AG04449 (cell line): ENCODE measurements at regions of chr5 and their contacts with region 1.

Region 1: DNA sequence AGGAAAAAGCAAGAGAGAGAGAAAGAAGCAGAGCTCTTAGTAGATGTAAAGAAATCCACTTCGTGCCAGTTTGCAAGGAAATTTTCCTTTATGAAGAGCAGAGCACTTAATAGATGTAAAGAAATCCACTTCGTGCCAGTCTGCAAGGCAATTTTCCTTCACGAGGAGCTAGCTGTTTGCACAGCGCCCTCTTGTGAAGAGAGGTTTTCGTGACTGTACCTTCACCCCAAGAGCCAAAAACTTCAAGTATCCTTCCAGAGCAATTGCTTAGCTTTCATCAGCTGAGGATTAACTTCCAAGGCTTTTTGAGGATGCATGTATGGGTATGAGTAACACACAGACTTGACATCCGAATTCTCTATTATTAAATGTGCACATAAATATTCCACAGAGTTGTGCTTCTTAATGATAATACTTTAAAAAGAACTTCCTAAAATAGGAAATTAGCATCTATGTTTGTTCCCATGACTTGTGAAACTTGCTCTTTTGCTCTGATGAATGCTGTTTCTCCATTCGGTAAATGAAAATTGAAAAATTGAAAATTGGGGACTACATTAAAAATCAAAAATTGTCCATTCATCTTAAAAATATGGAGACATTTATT is 525.6 kb downstream of the PDE4D start:
- DNase-seq: peak; percentile 23
- H3K4me3 ChIP-seq: no peak overlapping the region
- CTCF ChIP-seq: peak; percentile 79

Region 2: GRCh38 chr5:59180515-59180914 is 187.4 kb before region 1 on chr5:
- CTCF ChIA-PET with region 1: interaction called, 367 read pairs
- POLR2A ChIA-PET with region 1: no interaction called
- DNase-seq: no peak
- H3K4me3 ChIP-seq: no peak overlapping the region
- CTCF ChIP-seq: no peak

Region 3: GRCh38 chr5:59198365-59198764 is 169.5 kb before region 1 on chr5:
- CTCF ChIA-PET with region 1: interaction called, 367 read pairs
- POLR2A ChIA-PET with region 1: no interaction called
- DNase-seq: no peak
- H3K4me3 ChIP-seq: no peak overlapping the region
- CTCF ChIP-seq: no peak

Region 4: DNA sequence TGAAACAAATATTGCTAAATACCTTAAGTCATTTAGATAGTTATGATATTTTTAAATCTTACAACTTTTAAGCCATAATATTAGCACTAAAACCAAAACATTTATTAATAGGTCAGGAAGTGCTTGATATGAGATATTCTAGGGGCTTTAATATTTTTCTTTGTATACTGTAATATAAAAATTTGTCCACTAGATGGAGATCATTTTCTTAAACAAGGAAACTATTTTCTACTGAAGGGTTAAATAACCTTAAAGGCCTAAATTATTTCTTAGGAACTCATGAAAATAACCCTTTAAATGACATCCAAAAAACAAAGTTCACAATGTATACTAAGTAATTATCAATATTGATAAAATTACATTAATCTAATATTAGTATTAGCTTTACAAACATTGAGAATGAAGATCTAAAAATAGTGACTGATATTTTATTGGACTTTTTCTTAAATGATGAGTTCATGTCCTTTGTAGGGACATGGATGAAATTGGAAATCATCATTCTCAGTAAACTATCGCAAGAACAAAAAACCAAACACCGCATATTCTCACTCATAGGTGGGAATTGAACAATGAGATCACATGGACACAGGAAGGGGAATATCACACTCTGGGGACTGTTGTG is 149.4 kb before region 1 on chr5:
- CTCF ChIA-PET with region 1: interaction called, 73 read pairs
- POLR2A ChIA-PET with region 1: no interaction called
- DNase-seq: no peak
- H3K4me3 ChIP-seq: no peak overlapping the region
- CTCF ChIP-seq: no peak

Region 5: GRCh38 chr5:59356813-59357380 is 11.0 kb before region 1 on chr5:
- CTCF ChIA-PET with region 1: interaction called, 32 read pairs
- POLR2A ChIA-PET with region 1: no interaction called
- DNase-seq: no peak
- H3K4me3 ChIP-seq: no peak overlapping the region
- CTCF ChIP-seq: no peak